ENCODE measurements at regions of chr16 and their contacts with region 1.

Region 1: DNA sequence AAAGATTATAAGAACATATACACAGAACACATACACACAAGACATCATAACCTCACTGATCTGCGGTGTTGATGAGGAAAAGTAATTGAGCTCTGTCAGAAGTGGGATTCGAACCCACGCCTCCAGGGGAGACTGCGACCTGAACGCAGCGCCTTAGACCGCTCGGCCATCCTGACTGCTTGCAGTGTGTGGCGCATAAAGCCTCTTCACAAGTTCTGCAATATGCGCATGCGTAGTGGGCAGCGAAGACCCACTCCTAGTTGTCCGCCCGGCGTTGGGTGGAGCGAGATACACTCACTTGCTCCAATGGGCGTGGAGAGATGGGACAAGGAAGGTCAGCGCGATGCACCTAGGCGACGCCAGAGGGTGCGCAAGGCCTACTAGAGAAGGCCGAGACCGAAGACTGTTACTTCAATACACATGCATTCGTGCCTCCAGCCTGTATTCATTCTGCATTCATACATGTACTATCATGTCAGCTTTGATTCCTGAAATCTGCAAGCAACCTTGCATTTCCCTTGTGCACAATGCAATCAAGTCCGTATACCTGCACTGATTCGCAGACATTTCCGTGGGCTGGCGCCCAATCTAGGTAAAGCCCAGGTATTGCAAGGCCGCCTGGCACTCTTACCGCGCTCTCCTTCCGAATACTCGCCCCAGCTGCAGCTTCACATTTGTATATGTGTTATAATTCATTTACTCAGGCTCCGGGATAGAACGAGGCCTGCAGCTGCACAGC is 16.1 kb upstream of the PLLP start:
- DNase-seq: peak; percentile 99
- H3K4me3 ChIP-seq: peak overlapping the region; percentile 60
- H3K27ac ChIP-seq: peak overlapping the region; percentile 66
- H3K4me1 ChIP-seq: peaks cover 4% of the 10 kb centered on the region
- H3K27me3 ChIP-seq: no peaks in the 10 kb centered on the region
- CTCF ChIP-seq: peak; percentile 98

Region 2: DNA sequence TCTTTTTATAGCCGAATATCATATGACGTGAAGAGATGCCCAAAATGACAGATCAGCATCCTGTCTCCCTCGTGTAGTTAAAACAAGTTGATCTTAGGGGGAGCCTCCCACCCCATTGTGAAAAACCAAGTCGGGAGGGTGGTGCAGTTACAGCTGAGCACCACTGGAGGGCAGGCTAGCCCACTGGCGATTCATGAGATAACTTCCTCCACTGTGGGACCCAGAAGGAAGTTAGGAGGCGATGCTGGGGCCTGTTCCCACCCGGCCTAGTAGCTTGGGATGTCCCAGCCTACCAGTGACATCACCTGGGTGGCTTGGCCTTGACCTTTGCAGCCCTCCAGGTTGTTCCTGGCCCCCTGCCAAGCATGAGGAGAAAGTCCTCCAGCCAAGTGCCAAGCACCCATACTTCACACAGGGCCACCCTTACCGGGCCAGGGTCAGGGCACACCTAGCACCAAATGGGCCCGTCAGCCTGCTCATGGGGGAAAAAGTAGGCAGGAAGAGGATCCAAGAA is 216.2 kb before region 1 on chr16:
- CTCF ChIA-PET with region 1: interaction called, 3 read pairs
- POLR2A ChIA-PET with region 1: no interaction called
- intact Hi-C with region 1: loop called (anchors 2 kb)
- DNase-seq: peak; percentile 87
- H3K4me3 ChIP-seq: no peak overlapping the region
- H3K27ac ChIP-seq: no peak overlapping the region
- H3K4me1 ChIP-seq: no peaks in the 10 kb centered on the region
- H3K27me3 ChIP-seq: no peaks in the 10 kb centered on the region
- CTCF ChIP-seq: peak; percentile 98

Region 3: DNA sequence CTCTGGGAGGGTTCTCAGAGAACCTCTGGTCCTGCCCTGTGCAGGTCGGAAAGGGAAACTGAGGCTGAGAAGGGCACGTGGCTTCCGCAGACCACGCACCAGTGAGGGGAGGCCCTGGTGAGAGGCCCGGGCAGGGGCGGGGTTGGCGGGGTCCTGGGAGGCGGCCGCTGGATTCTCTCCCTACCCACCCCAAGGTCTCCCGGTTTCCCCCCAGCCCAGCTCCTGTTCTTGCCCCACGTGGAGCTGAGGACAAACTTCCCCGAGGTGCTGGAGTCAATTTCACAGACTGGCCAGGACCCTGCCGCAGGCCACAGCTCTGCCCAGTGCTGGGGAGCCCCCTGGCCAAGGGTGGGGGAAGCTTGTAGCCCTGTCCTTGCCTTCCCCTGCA is 115.6 kb after region 1 on chr16:
- CTCF ChIA-PET with region 1: interaction called, 25 read pairs
- POLR2A ChIA-PET with region 1: no interaction called
- intact Hi-C with region 1: loop called (anchors 1 kb)
- DNase-seq: no peak
- H3K4me3 ChIP-seq: no peak overlapping the region
- H3K27ac ChIP-seq: no peak overlapping the region
- H3K4me1 ChIP-seq: peaks cover 3% of the 10 kb centered on the region
- H3K27me3 ChIP-seq: no peaks in the 10 kb centered on the region
- CTCF ChIP-seq: no peak

Region 4: DNA sequence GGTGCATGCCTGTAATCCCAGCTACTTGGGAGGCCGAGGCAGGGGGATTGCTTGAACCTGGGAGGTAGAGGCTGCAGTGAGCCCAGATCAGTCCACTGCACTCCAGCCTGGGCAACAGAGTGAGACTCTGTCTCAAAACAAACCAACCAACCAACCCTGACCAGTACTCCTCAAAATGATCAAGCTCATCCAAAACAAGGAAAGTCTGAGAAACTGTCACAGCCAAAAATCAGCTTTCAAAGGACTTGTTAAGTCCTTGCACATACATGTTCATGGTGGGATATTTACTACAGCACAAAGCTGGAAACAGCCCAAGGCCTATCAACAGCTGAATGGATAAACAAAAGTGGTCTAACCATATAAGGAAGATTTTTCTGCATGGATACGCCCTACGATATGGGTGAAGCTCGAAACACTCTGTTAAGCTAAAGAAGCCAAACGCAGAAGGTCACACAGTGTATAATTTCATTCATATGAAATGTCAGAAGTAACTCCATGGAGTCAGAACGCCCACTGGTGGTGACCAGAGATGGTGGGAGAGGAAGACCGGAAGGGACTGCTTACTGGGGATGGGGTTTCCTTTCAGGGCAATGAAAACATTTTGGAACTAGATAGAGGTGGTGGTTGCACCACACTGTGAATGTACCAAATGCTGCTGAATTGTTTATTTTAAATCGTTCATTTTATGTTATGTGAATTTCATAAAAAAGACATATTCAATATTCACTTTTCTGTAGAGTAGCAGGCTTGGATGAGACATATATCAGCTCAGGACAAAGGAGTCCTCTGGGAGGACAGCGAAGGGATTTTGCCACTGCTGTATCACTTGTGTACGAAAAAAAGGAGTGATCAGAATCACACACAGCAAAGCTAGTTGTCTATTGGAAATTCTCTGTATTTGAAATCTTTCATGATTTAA is 121.7 kb after region 1 on chr16:
- CTCF ChIA-PET with region 1: interaction called, 25 read pairs
- POLR2A ChIA-PET with region 1: no interaction called
- intact Hi-C with region 1: loop called (anchors 1 kb)
- DNase-seq: peak; percentile 68
- H3K4me3 ChIP-seq: no peak overlapping the region
- H3K27ac ChIP-seq: no peak overlapping the region
- H3K4me1 ChIP-seq: peaks cover 3% of the 10 kb centered on the region
- H3K27me3 ChIP-seq: no peaks in the 10 kb centered on the region
- CTCF ChIP-seq: peak; percentile 67

Region 5: DNA sequence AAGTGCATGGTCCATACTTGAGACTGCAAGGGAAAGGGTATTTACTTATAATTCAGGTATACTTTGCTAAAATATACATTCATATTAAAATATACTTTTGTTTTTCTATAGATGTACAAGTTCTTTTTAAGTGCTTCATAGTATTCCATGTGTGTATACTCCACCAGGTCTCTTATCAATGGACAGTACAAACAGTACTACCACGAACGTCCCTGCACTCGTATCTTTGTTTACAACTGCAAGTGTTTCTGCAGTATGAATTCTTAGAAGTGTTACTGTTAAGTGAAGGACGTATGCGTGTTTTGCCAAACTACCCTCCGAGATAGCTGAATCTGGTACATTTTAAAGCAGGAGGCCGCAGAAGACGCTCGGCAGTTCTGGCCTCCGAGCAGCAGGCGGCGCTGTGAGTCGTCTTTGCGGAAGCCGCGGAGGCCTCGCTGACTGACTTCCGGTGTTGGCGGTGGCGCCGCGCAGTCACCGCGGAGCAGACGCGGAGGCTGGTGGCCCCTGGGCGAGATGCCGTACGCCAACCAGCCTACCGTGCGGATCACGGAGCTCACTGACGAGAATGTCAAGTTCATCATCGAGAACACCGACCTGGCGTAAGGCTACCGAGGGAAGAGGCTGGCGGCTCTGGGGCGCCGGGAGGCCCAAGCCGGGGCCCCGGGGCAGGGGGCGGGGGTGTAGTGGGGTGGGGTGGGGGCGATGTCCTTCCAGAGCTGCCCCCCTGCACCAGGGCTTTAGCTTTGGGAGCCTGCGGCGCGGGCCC is 161.8 kb after region 1 on chr16 and contains the start of gene POLR2C:
- CTCF ChIA-PET with region 1: no interaction called
- POLR2A ChIA-PET with region 1: no interaction called
- intact Hi-C with region 1: no loop called
- DNase-seq: peak; percentile 92
- H3K4me3 ChIP-seq: peak within 1 kb of the TSS; percentile 93
- H3K27ac ChIP-seq: peak within 1 kb of the TSS; percentile 73
- H3K4me1 ChIP-seq: no peaks in the 10 kb centered on the region
- H3K27me3 ChIP-seq: no peaks in the 10 kb centered on the region
- CTCF ChIP-seq: peak; percentile 98
- total RNA-seq, gene POLR2C: 96.2 and 110 TPM in 2 replicates

Region 6: GRCh38 chr16:57519796-57520360 is 219.3 kb after region 1 on chr16:
- CTCF ChIA-PET with region 1: interaction called, 12 read pairs
- POLR2A ChIA-PET with region 1: no interaction called
- intact Hi-C with region 1: loop called (anchors 1 kb)
- DNase-seq: peak; percentile 80
- H3K4me3 ChIP-seq: no peak overlapping the region
- H3K27ac ChIP-seq: no peak overlapping the region
- H3K4me1 ChIP-seq: no peaks in the 10 kb centered on the region
- H3K27me3 ChIP-seq: no peaks in the 10 kb centered on the region
- CTCF ChIP-seq: peak; percentile 98